ENCODE measurements at regions of chr1 and their contacts with region 1.

Region 1: GRCh38 chr1:18100491-18101063 is 7.0 kb upstream of the IGSF21 start:
- DNase-seq: peak; percentile 63
- H3K4me3 Mint-ChIP-seq: no peak overlapping the region
- H3K27ac Mint-ChIP-seq: no peak overlapping the region
- H3K4me1 Mint-ChIP-seq: no peaks in the 10 kb centered on the region
- H3K27me3 Mint-ChIP-seq: peaks cover 16% of the 10 kb centered on the region

Region 2: GRCh38 chr1:17661546-17662157 is 438.9 kb before region 1 on chr1:
- CTCF ChIA-PET with region 1: interaction called, 10 read pairs
- POLR2A ChIA-PET with region 1: no interaction called
- intact Hi-C with region 1: no loop called
- DNase-seq: peak; percentile 70
- H3K4me3 Mint-ChIP-seq: no peak overlapping the region
- H3K27ac Mint-ChIP-seq: no peak overlapping the region
- H3K4me1 Mint-ChIP-seq: no peaks in the 10 kb centered on the region
- H3K27me3 Mint-ChIP-seq: no peaks in the 10 kb centered on the region

Region 3: GRCh38 chr1:17984583-17984982 is 116.0 kb before region 1 on chr1:
- CTCF ChIA-PET with region 1: interaction called, 11 read pairs
- POLR2A ChIA-PET with region 1: no interaction called
- intact Hi-C with region 1: loop called (anchors 1 kb)
- DNase-seq: peak; percentile 23
- H3K4me3 Mint-ChIP-seq: no peak overlapping the region
- H3K27ac Mint-ChIP-seq: no peak overlapping the region
- H3K4me1 Mint-ChIP-seq: no peaks in the 10 kb centered on the region
- H3K27me3 Mint-ChIP-seq: peaks cover 2% of the 10 kb centered on the region